Activated naive CD4-positive, alpha-beta T cell treated with anti-CD3 and anti-CD28 coated beads for 36 hours (primary cell): ENCODE measurements at regions of chr11 and their contacts with region 1.

Region 1: DNA sequence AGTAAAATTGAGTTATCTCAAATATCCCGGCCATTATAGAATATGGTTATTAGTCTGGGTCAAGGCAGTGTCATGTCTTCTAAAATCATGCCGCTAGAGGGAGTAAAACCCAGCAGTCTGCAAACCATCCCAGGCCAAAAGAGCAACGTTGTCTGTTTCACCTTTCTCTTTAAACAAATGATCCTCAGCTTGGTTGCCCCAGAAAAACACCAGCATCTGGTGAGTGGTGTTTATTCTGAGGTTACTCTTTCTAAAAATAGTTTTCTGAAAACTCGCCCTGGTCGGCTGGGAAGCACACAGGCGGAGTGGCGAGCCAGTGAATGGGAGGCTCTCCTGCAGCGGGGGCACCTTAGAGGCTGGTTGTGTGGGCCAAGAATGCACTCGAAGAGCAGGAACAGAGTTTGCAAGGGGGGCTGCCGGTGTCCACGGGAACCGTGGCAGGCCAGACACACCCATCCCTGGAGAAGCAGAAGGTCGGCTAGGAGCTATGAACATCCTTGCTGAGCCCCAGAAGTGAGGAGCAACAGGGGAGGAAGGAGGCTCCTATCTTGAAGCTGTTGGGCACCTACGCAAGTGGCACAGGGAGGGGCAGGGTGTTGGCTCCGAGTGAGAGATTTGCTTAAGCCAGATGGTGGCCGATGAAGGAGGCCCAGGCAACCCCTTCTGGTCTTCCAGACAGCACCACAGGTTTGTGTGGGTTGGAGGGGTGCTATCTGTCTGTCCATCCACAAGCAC is 297.1 kb downstream of the ETS1 start:
- DNase-seq: peak; percentile 83
- H3K4me3 Mint-ChIP-seq: peak overlapping the region; percentile 87
- H3K27ac Mint-ChIP-seq: peak overlapping the region; percentile 96
- H3K4me1 Mint-ChIP-seq: peaks cover 98% of the 10 kb centered on the region
- H3K27me3 Mint-ChIP-seq: no peaks in the 10 kb centered on the region

Region 2: DNA sequence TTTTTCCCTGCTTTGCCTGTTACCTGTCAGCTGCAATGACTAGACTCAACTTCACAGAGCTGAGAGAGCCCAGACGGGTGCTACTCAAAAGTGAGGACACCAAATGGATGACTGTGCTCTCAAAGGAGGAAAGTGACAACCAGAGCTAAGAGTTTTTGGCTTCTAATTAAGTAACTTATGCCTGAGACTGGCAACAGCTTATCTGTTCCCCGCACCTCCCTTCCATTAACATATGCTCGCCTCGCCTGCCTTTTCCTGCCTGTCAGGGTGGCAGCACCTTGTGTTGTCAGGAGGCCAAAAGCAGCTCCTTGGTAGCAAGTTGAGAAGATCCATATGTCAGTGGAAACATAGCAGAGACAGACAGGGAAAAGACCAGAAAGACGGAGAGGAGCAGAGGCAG is 715.8 kb before region 1 on chr11:
- CTCF ChIA-PET with region 1: no interaction called
- intact Hi-C with region 1: no loop called
- DNase-seq: no peak
- H3K4me3 Mint-ChIP-seq: no peak overlapping the region
- H3K27ac Mint-ChIP-seq: no peak overlapping the region
- H3K4me1 Mint-ChIP-seq: no peaks in the 10 kb centered on the region
- H3K27me3 Mint-ChIP-seq: no peaks in the 10 kb centered on the region

Region 3: GRCh38 chr11:128026596-128026995 is 263.7 kb before region 1 on chr11:
- CTCF ChIA-PET with region 1: no interaction called
- intact Hi-C with region 1: loop called (anchors 2 kb)
- DNase-seq: no peak
- H3K4me3 Mint-ChIP-seq: no peak overlapping the region
- H3K27ac Mint-ChIP-seq: no peak overlapping the region
- H3K4me1 Mint-ChIP-seq: peaks cover 4% of the 10 kb centered on the region
- H3K27me3 Mint-ChIP-seq: no peaks in the 10 kb centered on the region

Region 4: DNA sequence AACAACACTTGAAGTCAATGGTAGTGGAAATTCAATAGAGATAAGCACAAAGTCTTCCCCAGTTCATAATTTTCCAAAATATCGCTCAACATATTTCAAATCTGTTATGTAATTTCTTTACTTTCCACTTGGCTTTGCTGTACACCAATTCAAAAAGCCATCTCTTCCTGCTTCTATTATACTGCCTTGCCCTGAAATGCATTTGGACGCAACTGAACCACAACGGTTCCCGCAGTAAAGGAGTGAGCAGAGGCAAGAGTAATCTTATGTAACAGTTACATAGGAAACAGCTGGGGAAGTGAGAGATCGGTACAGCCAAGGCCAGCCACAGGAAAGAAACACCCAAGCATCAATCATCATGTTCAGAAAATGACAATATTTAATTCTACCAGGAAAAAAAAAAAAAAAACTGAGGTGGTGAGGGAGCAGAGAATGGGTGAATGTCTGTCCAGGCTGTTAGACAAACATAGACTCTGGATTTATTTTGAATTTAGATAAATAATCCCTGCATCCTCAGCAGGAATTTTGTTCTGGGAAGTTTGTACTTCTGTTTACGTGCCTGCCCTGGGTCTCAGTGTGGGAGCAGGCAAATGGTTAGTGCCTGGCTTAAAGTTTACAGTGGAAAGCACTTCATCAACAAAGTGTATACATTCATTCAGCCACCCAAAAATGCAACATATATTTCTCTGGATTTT is 95.1 kb before region 1 on chr11:
- CTCF ChIA-PET with region 1: interaction called, 3 read pairs
- intact Hi-C with region 1: loop called (anchors 1 kb)
- DNase-seq: peak; percentile 77
- H3K4me3 Mint-ChIP-seq: peak overlapping the region; percentile 6
- H3K27ac Mint-ChIP-seq: peak overlapping the region; percentile 32
- H3K4me1 Mint-ChIP-seq: peaks cover 42% of the 10 kb centered on the region
- H3K27me3 Mint-ChIP-seq: no peaks in the 10 kb centered on the region

Region 5: GRCh38 chr11:128302425-128303186 is 12.3 kb after region 1 on chr11:
- CTCF ChIA-PET with region 1: interaction called, 16 read pairs
- intact Hi-C with region 1: loop called (anchors 1 kb)
- DNase-seq: peak; percentile 79
- H3K4me3 Mint-ChIP-seq: peak overlapping the region; percentile 74
- H3K27ac Mint-ChIP-seq: peak overlapping the region; percentile 93
- H3K4me1 Mint-ChIP-seq: peaks cover 80% of the 10 kb centered on the region
- H3K27me3 Mint-ChIP-seq: no peaks in the 10 kb centered on the region

Region 6: DNA sequence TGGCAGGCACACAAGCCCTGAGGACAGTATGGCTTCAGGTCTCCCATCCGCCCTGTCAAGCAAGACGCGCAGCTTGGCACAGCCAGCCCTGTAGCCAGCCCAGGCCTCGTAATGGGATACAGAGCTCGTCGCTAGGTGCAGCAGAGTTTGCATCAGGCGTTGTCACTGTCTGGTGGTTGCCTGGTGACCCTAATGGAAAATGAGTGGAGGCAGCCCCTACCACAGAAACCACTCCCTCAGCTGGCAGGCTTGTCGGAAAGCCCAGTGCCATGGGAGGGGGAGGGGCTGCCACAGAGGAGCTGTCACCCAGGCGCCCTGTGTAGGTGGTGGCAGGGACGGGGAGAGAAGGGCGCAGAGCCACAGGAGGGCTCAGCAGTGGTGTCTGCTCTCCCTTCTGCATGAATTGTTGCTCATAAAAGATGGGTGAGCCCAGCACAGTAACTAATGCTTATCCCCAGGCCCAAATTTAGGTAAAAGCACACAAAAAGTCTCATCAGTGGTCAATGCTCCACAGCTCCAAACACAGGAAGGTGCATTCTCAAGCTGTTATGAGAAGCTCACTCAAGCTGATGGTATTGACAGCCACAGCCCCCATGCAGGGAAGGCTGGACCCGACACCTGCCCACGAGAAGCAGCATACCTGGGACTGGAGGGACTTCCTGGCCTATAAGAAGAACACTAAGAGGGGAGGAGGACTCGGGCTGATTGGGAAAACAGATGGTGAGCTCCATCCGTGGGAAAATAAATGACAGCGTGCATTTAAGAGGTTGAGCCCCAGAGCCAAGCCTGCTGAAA is 132.5 kb after region 1 on chr11:
- CTCF ChIA-PET with region 1: interaction called, 6 read pairs
- intact Hi-C with region 1: loop called (anchors 1 kb)
- DNase-seq: peak; percentile 96
- H3K4me3 Mint-ChIP-seq: peak overlapping the region; percentile 44
- H3K27ac Mint-ChIP-seq: peak overlapping the region; percentile 75
- H3K4me1 Mint-ChIP-seq: peaks cover 63% of the 10 kb centered on the region
- H3K27me3 Mint-ChIP-seq: no peaks in the 10 kb centered on the region

Region 7: GRCh38 chr11:128522055-128522942 is 232.0 kb after region 1 on chr11:
- CTCF ChIA-PET with region 1: interaction called, 11 read pairs
- intact Hi-C with region 1: loop called (anchors 1 kb)
- DNase-seq: peak; percentile 92
- H3K4me3 Mint-ChIP-seq: peak overlapping the region; percentile 96
- H3K27ac Mint-ChIP-seq: peak overlapping the region; percentile 97
- H3K4me1 Mint-ChIP-seq: peaks cover 42% of the 10 kb centered on the region
- H3K27me3 Mint-ChIP-seq: no peaks in the 10 kb centered on the region

Region 8: DNA sequence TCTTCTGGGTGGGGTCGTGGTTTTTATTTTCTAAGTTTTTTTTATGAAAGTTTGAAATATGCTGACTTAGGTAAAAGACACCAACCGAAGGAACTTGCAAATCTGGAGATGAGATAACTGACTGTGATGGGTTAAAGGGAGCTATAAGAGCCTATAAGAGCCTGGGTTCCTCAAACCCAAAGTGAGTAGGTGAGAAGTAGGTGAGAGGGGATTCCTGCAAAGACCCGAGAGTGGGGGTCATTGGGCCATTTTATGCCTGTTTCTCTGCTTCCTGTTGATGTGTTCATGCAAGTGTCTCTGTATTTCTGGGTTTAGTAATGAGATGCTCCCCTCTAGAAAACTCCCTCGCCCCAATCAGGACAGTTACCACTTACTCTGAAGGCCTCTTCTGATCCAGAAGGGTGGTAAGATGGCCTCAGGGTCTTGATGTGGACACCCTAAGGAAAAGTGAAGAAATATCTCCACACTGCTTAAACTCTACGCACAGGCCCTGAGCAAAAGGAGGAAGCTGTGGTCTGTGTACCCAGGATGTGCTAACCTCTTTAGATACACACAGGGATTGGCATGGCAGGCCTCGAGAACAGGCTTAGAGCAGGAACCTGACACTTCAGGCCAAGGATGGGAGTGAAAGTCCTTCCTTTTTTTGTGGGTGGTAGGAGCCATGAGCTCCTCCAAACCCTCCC is 405.4 kb after region 1 on chr11:
- CTCF ChIA-PET with region 1: no interaction called
- intact Hi-C with region 1: loop called (anchors 2 kb)
- DNase-seq: peak; percentile 58
- H3K4me3 Mint-ChIP-seq: peak overlapping the region; percentile 90
- H3K27ac Mint-ChIP-seq: peak overlapping the region; percentile 94
- H3K4me1 Mint-ChIP-seq: peaks cover 54% of the 10 kb centered on the region
- H3K27me3 Mint-ChIP-seq: peaks cover 7% of the 10 kb centered on the region